ENCODE measurements at regions of chr21 and their contacts with region 1.

Region 1: GRCh38 chr21:35026617-35027562 is 22.2 kb downstream of the RUNX1 start:
- DNase-seq: peak; percentile 91
- H3K4me3 Mint-ChIP-seq: peak overlapping the region; percentile 69
- H3K27ac Mint-ChIP-seq: peak overlapping the region; percentile 98
- H3K4me1 Mint-ChIP-seq: peaks cover 82% of the 10 kb centered on the region
- H3K27me3 Mint-ChIP-seq: no peaks in the 10 kb centered on the region

Region 2: GRCh38 chr21:34933609-34934335 is 93.1 kb before region 1 on chr21:
- CTCF ChIA-PET with region 1: interaction called, 4 read pairs
- POLR2A ChIA-PET with region 1: interaction called, 22 read pairs
- DNase-seq: no peak
- H3K4me3 Mint-ChIP-seq: peak overlapping the region; percentile 63
- H3K27ac Mint-ChIP-seq: peak overlapping the region; percentile 95
- H3K4me1 Mint-ChIP-seq: peaks cover 79% of the 10 kb centered on the region
- H3K27me3 Mint-ChIP-seq: no peaks in the 10 kb centered on the region

Region 3: GRCh38 chr21:34967509-34968289 is 59.2 kb before region 1 on chr21:
- CTCF ChIA-PET with region 1: interaction called, 3 read pairs
- POLR2A ChIA-PET with region 1: interaction called, 21 read pairs
- DNase-seq: peak; percentile 55
- H3K4me3 Mint-ChIP-seq: peak overlapping the region; percentile 51
- H3K27ac Mint-ChIP-seq: peak overlapping the region; percentile 94
- H3K4me1 Mint-ChIP-seq: peaks cover 89% of the 10 kb centered on the region
- H3K27me3 Mint-ChIP-seq: peaks cover 4% of the 10 kb centered on the region

Region 4: DNA sequence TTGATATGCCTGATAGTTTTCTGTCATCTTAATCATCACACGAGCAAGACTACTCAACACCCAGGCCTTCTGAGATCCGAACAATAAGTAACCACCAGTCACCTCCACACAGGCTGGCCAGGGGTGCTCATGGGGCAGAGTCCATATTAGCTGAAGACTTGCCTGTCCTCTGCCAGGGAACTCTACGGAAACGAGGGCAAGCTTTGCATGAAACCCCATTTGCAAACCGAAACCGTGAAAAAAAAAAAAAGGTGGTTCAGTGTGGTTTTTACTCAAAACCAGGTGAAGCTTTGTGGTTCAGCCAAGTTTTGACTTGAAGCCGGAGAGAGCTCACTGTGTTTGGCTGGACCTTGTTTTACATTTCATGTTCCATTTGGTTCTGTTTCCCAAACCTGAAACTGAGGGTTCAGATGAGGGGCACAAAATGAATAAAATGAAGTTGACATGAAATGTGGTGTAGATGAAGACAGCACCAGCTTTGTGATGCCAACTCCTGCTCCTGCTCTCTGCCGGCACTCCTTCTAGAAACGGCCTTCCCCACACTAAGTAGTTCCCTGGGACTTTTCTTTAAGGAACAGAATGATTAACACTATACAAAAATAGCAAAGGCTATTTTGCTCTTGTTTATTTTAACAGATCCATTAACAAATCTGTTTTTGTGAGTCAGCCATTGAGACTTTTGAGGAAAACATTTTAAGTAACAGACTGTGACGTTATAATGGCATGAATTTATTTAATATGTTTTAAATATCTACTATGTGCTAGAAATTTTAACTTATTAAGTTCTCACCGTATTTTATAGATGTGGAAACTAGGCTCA is 52.5 kb before region 1 on chr21:
- CTCF ChIA-PET with region 1: no interaction called
- POLR2A ChIA-PET with region 1: interaction called, 23 read pairs
- DNase-seq: peak; percentile 64
- H3K4me3 Mint-ChIP-seq: peak overlapping the region; percentile 60
- H3K27ac Mint-ChIP-seq: peak overlapping the region; percentile 80
- H3K4me1 Mint-ChIP-seq: peaks cover 78% of the 10 kb centered on the region
- H3K27me3 Mint-ChIP-seq: peaks cover 9% of the 10 kb centered on the region

Region 5: DNA sequence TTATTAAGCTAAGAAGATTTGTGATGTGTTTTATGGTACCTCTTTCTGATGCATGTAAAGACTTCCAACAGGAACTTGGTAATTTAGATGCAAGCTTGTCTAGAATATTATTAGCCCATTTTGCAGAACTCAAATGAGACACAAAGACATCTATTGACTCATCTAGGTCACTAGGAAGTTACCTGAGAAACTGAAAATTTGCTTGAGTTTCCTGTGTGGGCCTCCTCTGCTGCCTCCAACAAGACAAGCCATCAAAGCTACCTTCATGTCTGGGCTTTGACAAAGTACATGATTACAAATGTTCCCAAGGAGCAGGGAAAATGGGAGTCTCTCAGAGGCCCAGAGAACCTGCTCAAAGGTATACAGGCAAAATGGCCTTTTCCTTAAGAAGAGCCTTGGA is 16.7 kb after region 1 on chr21:
- CTCF ChIA-PET with region 1: interaction called, 31 read pairs
- POLR2A ChIA-PET with region 1: interaction called, 428 read pairs
- DNase-seq: no peak
- H3K4me3 Mint-ChIP-seq: peak overlapping the region; percentile 91
- H3K27ac Mint-ChIP-seq: peak overlapping the region; percentile 99
- H3K4me1 Mint-ChIP-seq: peaks cover 78% of the 10 kb centered on the region
- H3K27me3 Mint-ChIP-seq: no peaks in the 10 kb centered on the region

Region 6: DNA sequence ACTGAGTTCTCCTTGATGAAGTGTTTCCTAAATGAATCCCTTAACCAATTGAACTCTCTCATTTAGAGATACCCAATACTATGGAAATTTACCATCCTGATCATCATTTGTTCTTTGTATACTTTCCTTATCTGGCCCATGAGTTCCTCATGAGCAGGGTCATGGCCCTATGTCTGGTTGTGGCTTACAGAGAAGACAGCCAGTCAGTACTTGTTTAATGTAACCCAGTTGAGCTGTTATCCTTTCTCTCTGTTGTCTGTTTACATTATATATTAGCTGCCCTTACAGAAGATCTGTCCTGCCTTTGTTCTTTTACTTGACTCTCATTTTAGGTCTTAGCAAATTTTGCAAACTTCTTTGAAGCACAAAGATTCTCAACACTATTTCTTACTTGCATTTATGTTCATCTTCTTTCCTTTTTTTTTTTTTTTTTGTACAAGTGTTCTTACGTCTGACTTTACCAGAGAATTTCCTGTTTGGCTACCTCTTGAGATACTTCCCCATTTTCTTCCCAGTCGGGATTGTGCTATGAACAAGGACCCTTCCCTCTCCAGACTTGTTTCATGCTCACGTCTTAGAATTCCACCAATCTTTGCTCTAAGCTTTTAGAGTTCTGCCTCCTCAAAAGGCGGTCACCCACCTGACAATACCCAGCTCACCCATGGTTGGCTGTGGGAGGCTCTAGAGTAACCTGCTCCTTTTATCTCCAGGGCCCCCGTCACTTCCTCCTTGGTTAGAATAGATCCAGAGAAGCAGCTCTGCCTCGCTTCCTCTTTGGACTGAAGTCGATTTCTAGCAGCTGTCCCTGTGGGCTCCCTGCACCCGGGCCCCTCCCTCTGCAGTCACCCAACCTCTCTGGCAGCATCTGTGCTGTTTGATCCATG is 75.8 kb after region 1 on chr21:
- CTCF ChIA-PET with region 1: no interaction called
- POLR2A ChIA-PET with region 1: no interaction called
- DNase-seq: no peak
- H3K4me3 Mint-ChIP-seq: no peak overlapping the region
- H3K27ac Mint-ChIP-seq: no peak overlapping the region
- H3K4me1 Mint-ChIP-seq: peaks cover 2% of the 10 kb centered on the region
- H3K27me3 Mint-ChIP-seq: no peaks in the 10 kb centered on the region

Measured in activated CD4-positive, alpha-beta memory T cell treated with anti-CD3 and anti-CD28 coated beads, Interleukin-2, amount 10 ng/mL, durations not matched to agents 7 days and 5 days (primary cell).